PC-9 (cell line): ENCODE measurements at regions of chr3 and their contacts with region 1.

Region 1: DNA sequence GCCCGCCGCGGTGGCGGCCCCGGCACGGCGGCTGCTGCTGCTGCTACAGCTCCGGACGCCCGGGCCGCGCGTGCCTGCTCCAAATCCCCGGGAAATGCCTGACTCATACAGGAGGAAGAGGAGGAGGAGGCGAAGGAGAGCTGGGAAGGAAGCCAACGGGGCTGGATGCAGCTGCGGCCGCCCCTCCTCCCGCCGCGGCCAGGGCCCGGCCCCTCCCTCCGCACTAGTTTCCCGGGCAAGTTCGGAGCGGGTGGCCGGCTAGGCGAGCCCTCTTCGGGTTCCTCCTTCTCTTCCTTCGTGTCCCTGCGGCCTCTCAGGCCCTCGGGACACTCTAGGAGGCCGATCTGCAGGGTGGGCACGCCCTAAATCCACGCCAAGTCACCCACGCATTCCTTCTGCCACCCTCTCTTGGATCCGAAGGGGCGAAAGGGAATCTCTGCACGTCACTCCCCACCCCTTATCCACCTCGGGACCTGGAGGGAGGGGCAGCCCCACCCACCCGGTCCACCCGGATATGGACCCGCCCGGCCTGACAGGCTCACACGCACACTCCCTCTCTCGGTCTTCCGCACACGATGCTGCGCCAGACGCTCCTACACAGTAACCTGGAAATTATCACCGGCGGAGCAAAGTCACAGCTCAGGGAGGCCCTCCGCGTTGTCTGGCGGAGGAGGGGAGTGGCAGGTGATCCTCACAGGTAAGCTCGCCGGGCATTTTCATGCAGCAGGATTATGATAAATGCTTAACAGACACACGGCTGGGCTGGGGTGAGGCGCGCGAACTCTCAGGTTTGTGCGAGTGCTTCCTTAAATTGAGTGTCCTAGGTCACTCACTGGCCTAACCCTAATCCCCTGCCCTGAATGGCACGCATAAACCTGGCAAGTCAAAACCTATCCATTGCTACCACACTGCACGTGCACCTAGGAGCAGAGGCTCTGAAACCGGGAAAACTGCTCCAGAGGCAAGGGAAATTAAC is at the starts of genes OSBPL10 and ZNF860:
- DNase-seq: peak; percentile 67 to 93
- H3K4me3 ChIP-seq: peak within 1 kb of the TSS; percentile 64
- H3K27ac ChIP-seq: peak within 1 kb of the TSS; percentile 34; the same call in 1 of the 2 replicates
- H3K4me1 ChIP-seq: peaks cover 18% of the 10 kb centered on the region
- H3K27me3 ChIP-seq: no peaks in the 10 kb centered on the region
- CTCF ChIP-seq: no peak
- total RNA-seq, gene OSBPL10: 42.0 and 56.9 TPM in 2 replicates
- total RNA-seq, gene ZNF860: 2.6 and 5.3 TPM in 2 replicates

Region 2: DNA sequence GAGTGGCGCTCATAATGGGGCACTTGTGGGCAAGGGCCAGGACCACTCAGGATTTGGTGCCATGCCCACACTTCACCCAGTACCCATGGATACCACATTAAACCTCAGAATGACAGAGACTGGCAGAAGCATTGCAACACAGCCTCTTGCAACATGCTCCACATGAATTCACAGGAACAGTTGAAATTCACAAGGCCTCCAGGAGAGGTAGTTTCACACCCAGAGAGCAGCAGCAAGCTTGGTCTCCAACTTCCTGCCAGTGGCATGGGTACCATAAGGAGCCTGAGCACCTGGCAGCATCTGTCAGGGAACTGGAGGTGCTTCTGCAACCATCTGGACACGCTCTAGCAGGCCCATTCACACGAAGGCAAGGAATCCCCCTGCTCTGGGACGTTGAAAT is 101.5 kb before region 1 on chr3:
- CTCF ChIA-PET with region 1: no interaction called
- POLR2A ChIA-PET with region 1: no interaction called
- intact Hi-C with region 1: loop called (anchors 10 kb)
- DNase-seq: no peak
- H3K4me3 ChIP-seq: no peak overlapping the region
- H3K27ac ChIP-seq: no peak overlapping the region
- H3K4me1 ChIP-seq: no peaks in the 10 kb centered on the region
- H3K27me3 ChIP-seq: no peaks in the 10 kb centered on the region
- CTCF ChIP-seq: no peak

Region 3: GRCh38 chr3:31936420-31937060 is 45.0 kb before region 1 on chr3:
- CTCF ChIA-PET with region 1: interaction called, 3 read pairs
- POLR2A ChIA-PET with region 1: no interaction called
- intact Hi-C with region 1: loop called (anchors 5 kb)
- DNase-seq: no peak
- H3K4me3 ChIP-seq: no peak overlapping the region
- H3K27ac ChIP-seq: no peak overlapping the region
- H3K4me1 ChIP-seq: peaks cover 6% of the 10 kb centered on the region; the same call in 1 of the 2 replicates
- H3K27me3 ChIP-seq: no peaks in the 10 kb centered on the region
- CTCF ChIP-seq: no peak

Region 4: DNA sequence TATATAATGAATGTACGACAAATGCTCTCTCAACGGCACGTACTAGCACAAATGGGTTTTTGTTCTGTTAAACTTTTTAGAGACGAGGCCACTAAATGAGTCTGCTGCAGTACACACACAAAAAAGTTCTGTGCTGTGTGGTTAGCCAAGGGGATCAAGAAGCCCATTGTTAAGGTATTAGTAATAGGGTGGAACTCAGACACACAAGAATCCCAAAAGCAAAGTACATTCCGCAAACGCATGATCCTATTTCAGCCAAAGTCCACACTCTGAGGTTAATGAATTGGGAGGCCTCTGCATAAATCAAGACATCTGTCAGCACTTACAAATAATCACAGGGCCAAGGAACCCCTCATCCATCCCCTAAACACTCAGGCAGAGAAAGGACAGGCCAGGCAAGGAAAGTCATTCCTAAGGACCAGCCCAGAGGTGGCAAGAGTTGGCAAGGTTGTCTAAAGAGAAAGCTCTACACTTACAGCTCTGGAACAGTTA is 12.5 kb before region 1 on chr3:
- CTCF ChIA-PET with region 1: no interaction called
- POLR2A ChIA-PET with region 1: no interaction called
- intact Hi-C with region 1: loop called (anchors 1 kb)
- DNase-seq: peak; percentile 59 to 83
- H3K4me3 ChIP-seq: no peak overlapping the region
- H3K27ac ChIP-seq: peak overlapping the region; percentile 71
- H3K4me1 ChIP-seq: peaks cover 6% of the 10 kb centered on the region
- H3K27me3 ChIP-seq: no peaks in the 10 kb centered on the region
- CTCF ChIP-seq: no peak

Region 5: GRCh38 chr3:31999907-32000439 is 18.5 kb after region 1 on chr3:
- CTCF ChIA-PET with region 1: interaction called, 13 read pairs
- POLR2A ChIA-PET with region 1: no interaction called
- intact Hi-C with region 1: no loop called
- DNase-seq: no peak
- H3K4me3 ChIP-seq: no peak overlapping the region
- H3K27ac ChIP-seq: no peak overlapping the region
- H3K4me1 ChIP-seq: no peaks in the 10 kb centered on the region
- H3K27me3 ChIP-seq: no peaks in the 10 kb centered on the region
- CTCF ChIP-seq: no peak

Region 6: GRCh38 chr3:32045091-32045964 is 63.8 kb after region 1 on chr3:
- CTCF ChIA-PET with region 1: no interaction called
- POLR2A ChIA-PET with region 1: no interaction called
- intact Hi-C with region 1: loop called (anchors 1 kb)
- DNase-seq: peak; percentile 47 to 90
- H3K4me3 ChIP-seq: peak overlapping the region; percentile 38; the same call in 1 of the 2 replicates
- H3K27ac ChIP-seq: peak overlapping the region; percentile 69
- H3K4me1 ChIP-seq: peaks cover 28% of the 10 kb centered on the region
- H3K27me3 ChIP-seq: no peaks in the 10 kb centered on the region
- CTCF ChIP-seq: no peak

Region 7: GRCh38 chr3:32200490-32200889 is 219.0 kb after region 1 on chr3:
- CTCF ChIA-PET with region 1: no interaction called
- POLR2A ChIA-PET with region 1: no interaction called
- intact Hi-C with region 1: no loop called
- DNase-seq: no peak
- H3K4me3 ChIP-seq: no peak overlapping the region
- H3K27ac ChIP-seq: no peak overlapping the region
- H3K4me1 ChIP-seq: no peaks in the 10 kb centered on the region
- H3K27me3 ChIP-seq: no peaks in the 10 kb centered on the region
- CTCF ChIP-seq: no peak